Calu3 (cell line): ENCODE measurements at regions of chr2 and their contacts with region 1.

Region 1: GRCh38 chr2:26033818-26034636 is at the start of gene RAB10:
- DNase-seq: peak; percentile 99
- H3K4me3 Mint-ChIP-seq: peak within 1 kb of the TSS; percentile 77
- H3K27ac Mint-ChIP-seq: peak within 1 kb of the TSS; percentile 68
- H3K4me1 Mint-ChIP-seq: peaks cover 13% of the 10 kb centered on the region
- H3K27me3 Mint-ChIP-seq: no peaks in the 10 kb centered on the region
- CTCF ChIP-seq: no peak
- total RNA-seq, gene RAB10: 149 and 157 TPM in 2 replicates

Region 2: DNA sequence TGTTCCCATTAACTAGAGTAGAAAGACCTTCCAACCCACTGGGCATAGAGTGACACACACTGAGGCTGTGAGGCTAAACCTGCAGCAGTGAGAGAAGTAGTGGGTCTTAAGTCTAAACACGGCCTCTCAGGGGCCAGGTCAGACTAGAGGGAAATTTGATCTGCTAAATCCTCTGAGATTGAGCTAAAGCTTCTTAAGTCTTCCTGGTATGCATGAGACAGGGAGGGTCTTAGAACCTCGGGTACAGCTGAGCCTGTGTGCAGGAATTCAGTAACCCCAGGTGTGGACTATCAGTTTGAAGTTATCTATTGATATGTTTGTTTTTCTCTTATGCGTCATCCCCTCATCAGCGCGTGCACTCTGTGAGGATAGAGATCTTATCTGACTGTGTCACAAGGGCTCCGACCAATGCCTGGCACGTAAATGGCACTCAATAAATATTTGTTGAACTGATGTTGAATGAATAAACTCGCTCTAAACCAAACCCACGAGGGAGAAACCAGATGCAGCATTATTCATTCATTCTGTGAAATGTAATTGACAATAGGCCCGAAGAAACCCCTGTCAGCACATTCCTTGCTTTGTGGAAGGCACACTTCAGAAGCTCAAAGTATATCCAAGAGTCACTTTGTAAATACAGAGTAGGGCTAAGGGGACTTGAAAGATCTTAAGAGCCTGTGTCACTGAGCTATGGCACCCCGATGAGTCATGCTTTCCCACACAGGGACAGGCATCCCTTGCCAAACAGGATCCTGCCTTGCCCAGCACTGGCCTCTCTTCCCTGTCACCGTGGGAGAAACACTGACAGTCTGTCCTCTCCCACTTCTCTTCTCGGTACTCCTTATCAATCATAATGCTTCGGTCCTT is 21.8 kb before region 1 on chr2:
- CTCF ChIA-PET with region 1: interaction called, 19 read pairs
- intact Hi-C with region 1: no loop called
- DNase-seq: peak; percentile 82
- H3K4me3 Mint-ChIP-seq: peak overlapping the region; percentile 57
- H3K27ac Mint-ChIP-seq: peak overlapping the region; percentile 91
- H3K4me1 Mint-ChIP-seq: peaks cover 54% of the 10 kb centered on the region
- H3K27me3 Mint-ChIP-seq: no peaks in the 10 kb centered on the region
- CTCF ChIP-seq: no peak

Region 3: GRCh38 chr2:26072925-26073768 is 39.1 kb after region 1 on chr2:
- CTCF ChIA-PET with region 1: no interaction called
- intact Hi-C with region 1: loop called (anchors 5 kb)
- DNase-seq: no peak
- H3K4me3 Mint-ChIP-seq: peak overlapping the region; percentile 15
- H3K27ac Mint-ChIP-seq: peak overlapping the region; percentile 46
- H3K4me1 Mint-ChIP-seq: peaks cover 51% of the 10 kb centered on the region
- H3K27me3 Mint-ChIP-seq: no peaks in the 10 kb centered on the region
- CTCF ChIP-seq: no peak